ENCODE measurements at regions of chr2 and their contacts with region 1.

Region 1: GRCh38 chr2:172427256-172427989 is at the start of gene ITGA6:
- DNase-seq: peak; percentile 79
- ATAC-seq: peak; percentile 66
- H3K4me3 Mint-ChIP-seq: peak within 1 kb of the TSS; percentile 91
- H3K27ac Mint-ChIP-seq: peak within 1 kb of the TSS; percentile 87
- H3K4me1 Mint-ChIP-seq: peaks cover 28% of the 10 kb centered on the region
- H3K27me3 Mint-ChIP-seq: peaks cover 13% of the 10 kb centered on the region
- CTCF ChIP-seq: no peak
- total RNA-seq, gene ITGA6: 78.8 to 83.6 TPM (median 82.4 TPM) in 3 replicates

Region 2: GRCh38 chr2:172442072-172442895 is 14.9 kb after region 1 on chr2:
- CTCF ChIA-PET with region 1: interaction called, 21 read pairs
- POLR2A ChIA-PET with region 1: interaction called, 7 read pairs
- DNase-seq: no peak
- ATAC-seq: peak; percentile 78
- H3K4me3 Mint-ChIP-seq: no peak overlapping the region
- H3K27ac Mint-ChIP-seq: peak overlapping the region; percentile 35
- H3K4me1 Mint-ChIP-seq: peaks cover 51% of the 10 kb centered on the region
- H3K27me3 Mint-ChIP-seq: no peaks in the 10 kb centered on the region
- CTCF ChIP-seq: no peak